ENCODE measurements at regions of chr21 and their contacts with region 1.

Region 1: DNA sequence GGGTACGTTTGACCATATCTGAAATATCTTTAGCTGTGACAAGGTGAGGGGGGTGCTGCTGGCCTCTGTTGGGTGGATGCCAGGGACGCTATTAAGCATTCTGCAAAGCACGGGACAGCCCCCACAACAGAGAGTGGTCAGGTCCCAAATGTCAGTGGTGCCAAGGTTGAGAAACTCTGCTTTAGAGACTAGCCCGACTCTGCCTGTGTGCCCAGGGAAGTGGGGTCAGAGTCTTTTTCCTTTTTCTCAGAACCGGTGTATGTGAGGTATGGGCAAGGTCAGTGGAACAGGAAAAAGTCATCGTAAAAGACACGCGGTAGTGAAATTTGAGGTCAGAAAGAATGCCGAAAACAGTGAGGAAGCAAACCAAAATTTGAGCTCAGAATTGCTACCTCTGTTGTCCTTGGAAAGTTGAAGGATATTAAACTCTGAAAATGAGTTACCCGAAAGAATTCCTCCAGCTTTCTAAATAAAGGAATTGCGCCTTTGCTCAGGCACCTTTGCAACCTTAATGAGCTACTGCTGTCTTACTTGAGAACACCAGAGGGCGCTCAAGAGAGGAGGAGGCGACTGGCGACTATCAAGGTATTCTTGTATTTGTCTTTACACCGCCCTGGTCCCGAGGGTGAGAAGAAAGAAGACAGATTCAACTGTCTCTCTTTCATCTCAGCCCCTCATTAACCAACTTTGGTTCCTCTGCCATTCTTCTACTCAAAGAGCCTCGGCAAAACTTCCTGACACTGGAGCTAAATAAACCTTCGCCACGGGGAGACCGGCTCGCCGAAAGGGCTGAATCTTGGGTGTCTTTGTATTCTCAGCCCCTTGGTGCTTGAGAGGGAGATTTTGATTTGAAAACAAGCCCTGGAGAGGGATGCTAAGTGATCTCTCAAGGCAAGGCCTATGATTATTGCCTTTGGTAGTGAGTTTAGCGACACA is 85.4 kb upstream of the OLIG2 start:
- DNase-seq: peak; percentile 26
- H3K4me3 ChIP-seq: no peak overlapping the region
- H3K27ac ChIP-seq: no peak overlapping the region
- H3K4me1 ChIP-seq: no peaks in the 10 kb centered on the region
- H3K27me3 ChIP-seq: no peaks in the 10 kb centered on the region
- CTCF ChIP-seq: peak; percentile 82 to 83

Region 2: DNA sequence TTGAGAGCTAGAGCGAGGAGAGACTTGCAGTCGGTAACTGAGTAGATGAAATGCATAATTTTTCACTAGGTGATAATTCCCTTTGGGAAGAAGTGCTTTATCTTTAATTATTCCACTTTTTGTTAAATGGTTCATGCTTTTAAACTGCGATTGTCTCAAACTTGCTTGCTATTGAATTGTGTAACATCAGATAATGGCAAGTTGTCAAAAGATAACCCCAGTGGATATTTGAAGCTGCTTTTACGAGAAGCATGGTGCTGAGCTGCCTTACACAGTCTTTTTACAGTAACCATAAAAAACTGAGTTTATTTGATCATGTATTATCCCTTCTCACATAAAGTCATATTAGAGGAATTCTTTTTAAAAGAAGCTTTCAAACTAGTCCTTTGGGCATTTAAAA is 509.3 kb after region 1 on chr21:
- CTCF ChIA-PET with region 1: no interaction called
- dilution Hi-C with region 1: no loop called
- in situ Hi-C with region 1: no loop called
- intact Hi-C with region 1: loop called (anchors 5 kb)
- DNase-seq: no peak
- H3K4me3 ChIP-seq: no peak overlapping the region
- H3K27ac ChIP-seq: no peak overlapping the region
- H3K4me1 ChIP-seq: peaks cover 14% of the 10 kb centered on the region
- H3K27me3 ChIP-seq: no peaks in the 10 kb centered on the region
- CTCF ChIP-seq: no peak